Activated naive CD8-positive, alpha-beta T cell treated with anti-CD3 and anti-CD28 coated beads, Interleukin-2, amount 10 ng/mL, durations not matched to agents 7 days and 5 days (primary cell): ENCODE measurements at regions of chr9 and their contacts with region 1.

Region 1: DNA sequence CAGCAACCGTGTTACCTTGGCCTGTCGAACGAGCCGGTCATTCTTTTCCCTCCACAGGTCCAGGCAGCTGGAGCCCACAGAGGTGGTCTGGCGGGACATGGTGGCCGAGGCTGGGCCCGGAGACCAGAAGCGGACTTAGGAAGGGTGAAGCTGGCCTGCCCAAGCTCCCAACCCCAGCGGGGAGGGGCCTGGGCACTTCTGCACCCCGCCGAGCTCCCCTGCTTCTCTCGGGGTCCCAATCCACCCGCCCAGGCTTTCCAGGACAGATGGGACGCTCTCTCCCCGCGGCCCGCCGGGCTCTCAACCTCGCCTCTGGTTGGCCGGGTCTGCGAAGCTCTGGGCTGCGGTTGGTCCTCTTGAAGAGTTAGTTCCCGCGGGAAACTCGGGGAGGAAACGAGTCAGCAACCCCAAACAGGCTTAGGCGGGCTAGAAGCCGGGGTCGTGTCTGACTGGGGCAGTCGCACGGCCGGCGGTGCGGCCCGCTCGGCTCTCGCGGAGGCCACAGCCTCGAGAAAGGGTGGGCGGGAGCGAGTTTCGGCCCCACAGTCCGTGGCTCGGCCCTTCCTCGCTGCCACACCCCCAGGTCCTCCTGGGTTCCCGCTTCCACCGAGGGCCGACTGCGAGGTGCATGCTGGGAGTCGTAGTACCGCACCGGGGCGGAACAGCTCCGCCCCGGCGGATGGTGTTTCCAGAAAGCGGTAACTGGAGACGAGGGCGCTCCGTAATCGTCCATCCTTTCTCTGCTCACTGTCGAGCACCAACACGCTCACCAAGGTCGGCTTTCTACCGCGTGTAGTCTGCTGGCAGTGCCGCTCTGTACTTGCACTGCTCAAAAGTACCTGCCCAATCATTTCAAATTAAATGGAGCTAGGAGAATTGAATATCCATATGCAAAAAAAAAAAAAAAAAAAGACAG is at the start of gene FANCG:
- DNase-seq: peak; percentile 87
- ATAC-seq: peak; percentile 88
- H3K4me3 Mint-ChIP-seq: peak within 1 kb of the TSS; percentile 98
- H3K27ac Mint-ChIP-seq: peak within 1 kb of the TSS; percentile 99
- H3K4me1 Mint-ChIP-seq: peaks cover 22% of the 10 kb centered on the region
- H3K27me3 Mint-ChIP-seq: no peaks in the 10 kb centered on the region
- total RNA-seq, gene FANCG: 103 to 109 TPM

Region 2: DNA sequence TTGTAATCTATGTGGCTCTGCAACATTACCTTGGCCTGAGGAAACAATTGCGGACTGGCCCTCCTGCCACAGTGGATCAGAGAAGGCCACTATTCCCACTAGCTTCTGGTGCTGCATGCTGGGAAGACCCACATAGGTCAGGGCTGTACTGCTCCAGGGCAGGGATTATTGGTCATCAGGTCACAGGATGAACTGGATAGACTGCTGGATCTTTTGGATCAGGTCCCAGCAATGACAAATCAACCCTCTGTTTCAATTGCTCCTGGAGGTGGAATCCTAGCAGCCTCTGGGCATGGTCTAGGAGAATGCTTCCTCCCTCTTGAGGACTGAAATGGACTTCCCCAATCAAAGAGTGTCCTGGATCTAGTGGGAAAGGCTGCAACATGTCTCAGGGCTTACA is 188.3 kb before region 1 on chr9:
- POLR2A ChIA-PET with region 1: no interaction called
- DNase-seq: no peak
- ATAC-seq: no peak
- H3K4me3 Mint-ChIP-seq: no peak overlapping the region
- H3K27ac Mint-ChIP-seq: no peak overlapping the region
- H3K4me1 Mint-ChIP-seq: no peaks in the 10 kb centered on the region
- H3K27me3 Mint-ChIP-seq: peaks cover 32% of the 10 kb centered on the region

Region 3: GRCh38 chr9:34989003-34989945 is 90.4 kb before region 1 on chr9 and contains the start of gene DNAJB5:
- POLR2A ChIA-PET with region 1: interaction called, 12 read pairs
- DNase-seq: peak; percentile 98
- ATAC-seq: peak; percentile 95
- H3K4me3 Mint-ChIP-seq: peak within 1 kb of the TSS; percentile 81
- H3K27ac Mint-ChIP-seq: peak within 1 kb of the TSS; percentile 92
- H3K4me1 Mint-ChIP-seq: peaks cover 42% of the 10 kb centered on the region
- H3K27me3 Mint-ChIP-seq: no peaks in the 10 kb centered on the region
- total RNA-seq, gene DNAJB5: 3.3 to 5.0 TPM

Region 4: DNA sequence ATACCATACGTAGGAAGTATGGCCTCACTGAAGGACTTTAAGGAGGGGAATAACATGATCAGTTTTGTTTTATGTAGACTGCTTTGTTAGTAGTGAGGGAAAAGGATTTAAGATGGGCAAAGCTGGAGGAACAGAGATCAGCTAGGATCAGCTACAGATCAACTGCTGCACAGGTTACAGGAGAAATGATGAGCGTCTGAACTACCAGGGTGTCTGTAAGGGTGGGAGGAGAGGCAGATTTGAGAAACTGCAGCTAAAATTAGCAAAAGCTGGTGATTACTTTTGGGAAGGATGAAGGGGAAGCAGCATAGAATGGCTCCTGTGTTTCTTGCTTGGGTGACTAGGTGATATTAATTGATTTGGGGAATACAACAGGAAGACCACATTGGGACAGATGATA is 46.6 kb before region 1 on chr9:
- POLR2A ChIA-PET with region 1: no interaction called
- DNase-seq: no peak
- ATAC-seq: no peak
- H3K4me3 Mint-ChIP-seq: no peak overlapping the region
- H3K27ac Mint-ChIP-seq: no peak overlapping the region
- H3K4me1 Mint-ChIP-seq: peaks cover 7% of the 10 kb centered on the region
- H3K27me3 Mint-ChIP-seq: no peaks in the 10 kb centered on the region

Region 5: DNA sequence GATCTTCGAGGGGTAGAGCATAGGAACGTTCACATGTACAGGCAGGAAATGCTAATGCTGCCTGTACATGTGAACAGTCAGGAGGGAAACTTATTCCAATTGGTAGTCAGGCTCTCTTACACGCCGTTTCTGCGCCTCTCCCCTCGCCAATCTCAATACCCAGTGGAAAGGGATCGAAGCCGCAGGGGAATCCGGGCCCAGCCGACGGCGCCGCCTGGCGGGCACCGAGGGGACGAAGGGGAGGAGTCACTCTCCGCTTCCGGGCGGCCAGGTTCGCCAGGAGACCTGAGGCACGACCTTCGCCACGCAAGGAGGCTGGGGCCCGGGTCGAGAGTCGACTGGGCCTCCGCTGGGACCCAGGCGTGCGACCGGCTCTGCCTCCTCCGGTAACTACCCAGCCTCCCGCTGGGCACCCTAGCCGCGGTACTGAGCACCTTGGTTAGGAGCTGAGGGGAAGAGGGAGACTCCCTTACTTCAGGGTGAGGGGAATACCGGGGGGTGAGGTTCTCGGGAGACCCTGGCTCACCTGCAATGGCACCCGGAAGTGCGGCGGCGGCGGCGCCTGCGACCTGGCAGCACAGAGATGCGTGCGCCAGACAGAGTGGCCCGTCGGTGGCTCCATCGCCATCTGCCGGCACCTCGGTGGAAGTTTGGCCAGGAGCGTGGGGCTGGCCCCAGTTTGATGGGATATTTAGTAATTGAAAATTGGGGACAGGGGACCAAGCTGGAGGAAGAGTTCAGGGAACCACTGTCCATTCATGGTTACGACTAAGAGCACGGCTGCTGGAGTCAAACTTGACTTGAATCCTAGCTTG is 16.6 kb after region 1 on chr9 and contains the start of gene PIGO:
- POLR2A ChIA-PET with region 1: interaction called, 64 read pairs
- DNase-seq: peak; percentile 92
- ATAC-seq: peak; percentile 92
- H3K4me3 Mint-ChIP-seq: peak within 1 kb of the TSS; percentile 86
- H3K27ac Mint-ChIP-seq: peak within 1 kb of the TSS; percentile 88
- H3K4me1 Mint-ChIP-seq: peaks cover 29% of the 10 kb centered on the region
- H3K27me3 Mint-ChIP-seq: no peaks in the 10 kb centered on the region
- total RNA-seq, gene PIGO: 30.8 to 31.4 TPM

Region 6: DNA sequence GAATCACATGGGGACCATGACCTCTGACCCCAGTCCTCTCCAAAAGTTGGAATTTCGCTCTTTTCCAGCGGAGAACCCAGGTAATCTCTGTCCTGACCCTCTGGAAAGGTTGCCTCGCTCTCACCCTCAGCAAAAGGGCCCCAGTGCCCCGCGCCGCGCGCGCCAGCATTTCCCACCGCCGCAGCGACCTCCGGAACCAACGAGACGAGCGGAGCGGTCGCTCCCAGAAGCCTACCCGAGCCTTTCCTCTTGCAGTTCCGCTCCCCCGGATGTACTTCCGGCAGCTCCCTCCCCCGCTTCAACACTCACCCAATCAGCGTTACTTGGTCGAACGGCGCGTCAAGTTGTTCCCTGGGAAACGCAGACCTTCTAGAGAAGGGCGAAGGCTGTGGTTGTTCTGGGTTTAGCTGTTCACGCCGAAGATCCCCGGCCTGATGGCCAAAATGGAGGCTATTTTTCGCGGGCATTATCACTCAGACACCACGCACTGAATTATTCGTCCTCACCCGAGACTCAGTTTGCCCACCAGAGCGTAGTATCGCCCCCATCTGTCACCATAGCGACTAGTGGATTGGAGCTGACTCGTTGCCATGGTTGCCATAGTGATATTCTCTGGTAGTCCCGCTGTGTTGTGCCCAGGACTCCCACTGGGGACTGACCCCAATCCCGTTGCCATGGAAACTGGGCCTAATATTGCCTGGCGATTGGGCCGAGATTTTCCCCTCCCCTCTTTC is 23.4 kb after region 1 on chr9 and contains the start of gene STOML2:
- POLR2A ChIA-PET with region 1: interaction called, 64 read pairs
- DNase-seq: peak; percentile 85
- ATAC-seq: peak; percentile 96
- H3K4me3 Mint-ChIP-seq: peak within 1 kb of the TSS; percentile 81
- H3K27ac Mint-ChIP-seq: peak within 1 kb of the TSS; percentile 95
- H3K4me1 Mint-ChIP-seq: peaks cover 31% of the 10 kb centered on the region
- H3K27me3 Mint-ChIP-seq: no peaks in the 10 kb centered on the region
- total RNA-seq, gene STOML2: 90.3 to 91.9 TPM

Region 7: GRCh38 chr9:35111001-35111933 is 31.6 kb after region 1 on chr9:
- POLR2A ChIA-PET with region 1: interaction called, 36 read pairs
- DNase-seq: peak; percentile 90
- ATAC-seq: peak; percentile 64
- H3K4me3 Mint-ChIP-seq: peak overlapping the region; percentile 80
- H3K27ac Mint-ChIP-seq: peak overlapping the region; percentile 69
- H3K4me1 Mint-ChIP-seq: peaks cover 47% of the 10 kb centered on the region
- H3K27me3 Mint-ChIP-seq: no peaks in the 10 kb centered on the region

Region 8: DNA sequence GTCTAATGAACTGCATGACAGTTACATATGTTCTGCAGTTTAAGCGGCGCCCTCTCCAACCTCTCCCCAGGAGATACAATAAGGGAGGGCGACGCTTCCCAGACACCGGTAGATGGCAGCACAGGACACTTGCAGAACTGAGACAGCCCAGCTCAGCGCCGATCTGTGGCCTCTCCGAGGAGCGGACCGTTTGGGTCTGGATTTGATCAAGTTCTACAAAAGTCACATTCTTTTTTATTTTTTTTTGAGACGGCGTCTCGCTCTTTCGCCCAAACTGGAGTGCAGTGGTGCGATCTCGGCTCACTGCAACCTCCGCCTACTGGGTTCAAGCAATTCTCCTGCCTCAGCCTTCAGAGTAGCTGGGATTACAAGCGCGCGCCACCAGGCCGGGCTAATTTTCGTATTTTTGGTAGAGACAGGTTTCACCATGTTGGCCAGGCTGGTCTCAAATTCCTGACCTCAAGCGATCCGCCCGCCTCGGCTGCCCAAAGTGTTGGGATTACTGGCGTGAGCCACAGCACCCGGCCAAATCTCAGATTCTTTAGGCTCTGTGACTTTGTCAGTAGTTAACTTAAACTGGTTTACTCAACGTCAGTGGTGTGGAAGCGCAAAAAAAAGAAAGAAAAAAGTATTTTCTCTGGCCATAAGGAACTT is 37.3 kb after region 1 on chr9:
- POLR2A ChIA-PET with region 1: interaction called, 36 read pairs
- DNase-seq: peak; percentile 73
- ATAC-seq: peak; percentile 46
- H3K4me3 Mint-ChIP-seq: peak overlapping the region; percentile 100
- H3K27ac Mint-ChIP-seq: peak overlapping the region; percentile 98
- H3K4me1 Mint-ChIP-seq: peaks cover 33% of the 10 kb centered on the region
- H3K27me3 Mint-ChIP-seq: peaks cover 5% of the 10 kb centered on the region

Region 9: DNA sequence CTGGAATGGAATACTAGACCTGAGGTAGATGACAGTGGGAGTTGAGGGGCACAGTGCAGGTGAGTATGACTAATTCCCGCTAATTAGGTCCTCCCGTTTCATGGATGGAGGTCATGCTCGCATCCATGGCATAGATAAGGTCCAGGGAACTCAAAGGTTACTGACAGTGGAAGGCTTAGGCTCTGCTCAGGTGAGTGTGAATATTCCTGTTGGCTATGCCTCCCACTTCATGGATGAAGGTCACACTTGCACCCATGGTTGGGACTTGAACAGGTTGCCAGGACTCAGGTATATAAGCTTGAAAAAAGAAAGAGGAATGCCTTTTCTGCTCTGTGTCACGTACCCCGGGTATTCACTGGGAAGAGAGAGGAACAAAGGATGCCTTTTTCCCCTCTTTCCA is 62.4 kb after region 1 on chr9:
- POLR2A ChIA-PET with region 1: no interaction called
- DNase-seq: no peak
- ATAC-seq: no peak
- H3K4me3 Mint-ChIP-seq: no peak overlapping the region
- H3K27ac Mint-ChIP-seq: no peak overlapping the region
- H3K4me1 Mint-ChIP-seq: no peaks in the 10 kb centered on the region
- H3K27me3 Mint-ChIP-seq: no peaks in the 10 kb centered on the region